ENCODE measurements at regions of chr11 and their contacts with region 1.

Region 1: DNA sequence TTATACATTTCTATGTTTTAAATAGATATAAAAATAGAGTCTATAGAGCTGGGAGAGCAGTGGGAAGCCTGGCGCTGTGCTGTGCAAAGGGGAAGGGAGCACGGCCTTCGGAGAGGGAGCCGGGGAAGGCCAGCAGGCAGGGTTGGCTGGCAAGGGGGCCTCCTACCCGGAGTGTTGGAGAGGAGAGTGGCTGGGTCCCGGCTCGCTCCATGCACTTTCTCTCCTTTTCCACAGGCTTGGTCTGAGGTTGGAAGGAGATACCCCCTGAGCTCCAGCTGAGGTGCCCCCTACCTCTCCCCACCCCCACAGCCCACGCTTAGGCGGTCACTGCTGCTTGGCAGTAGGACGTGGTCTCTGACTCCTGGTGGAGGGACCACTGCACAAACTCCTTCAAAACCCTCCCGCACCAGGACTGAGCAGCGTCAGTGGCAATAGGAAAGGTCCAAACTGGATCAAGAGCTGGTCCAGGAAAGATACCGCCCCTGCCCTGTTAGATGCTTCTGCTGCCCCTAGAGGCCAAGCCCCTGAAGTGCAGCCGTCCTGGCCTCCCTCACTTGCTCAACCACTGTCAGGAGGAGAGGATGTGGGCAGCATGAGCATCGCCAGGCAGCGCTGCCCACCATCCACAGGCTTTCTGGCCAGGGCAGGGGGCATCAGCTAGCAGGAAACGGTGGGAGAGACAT is 52.9 kb downstream of the SYT13 start:
- DNase-seq: peak; percentile 86
- CTCF ChIP-seq: peak; percentile 85

Region 2: GRCh38 chr11:45158198-45158731 is 75.0 kb before region 1 on chr11:
- CTCF ChIA-PET with region 1: no interaction called
- POLR2A ChIA-PET with region 1: no interaction called
- DNase-seq: no peak
- CTCF ChIP-seq: no peak

Region 3: GRCh38 chr11:45215098-45215865 is 18.0 kb before region 1 on chr11:
- CTCF ChIA-PET with region 1: interaction called, 29 read pairs
- POLR2A ChIA-PET with region 1: interaction called, 3 read pairs
- DNase-seq: no peak
- CTCF ChIP-seq: no peak

Region 4: GRCh38 chr11:45252134-45252855 is 19.0 kb after region 1 on chr11:
- CTCF ChIA-PET with region 1: interaction called, 39 read pairs
- POLR2A ChIA-PET with region 1: no interaction called
- DNase-seq: peak; percentile 57
- CTCF ChIP-seq: peak; percentile 57

Region 5: GRCh38 chr11:45580399-45580798 is 347.1 kb after region 1 on chr11:
- CTCF ChIA-PET with region 1: no interaction called
- POLR2A ChIA-PET with region 1: no interaction called
- DNase-seq: no peak
- CTCF ChIP-seq: no peak